ENCODE measurements at regions of chr1 and their contacts with region 1.

Region 1: DNA sequence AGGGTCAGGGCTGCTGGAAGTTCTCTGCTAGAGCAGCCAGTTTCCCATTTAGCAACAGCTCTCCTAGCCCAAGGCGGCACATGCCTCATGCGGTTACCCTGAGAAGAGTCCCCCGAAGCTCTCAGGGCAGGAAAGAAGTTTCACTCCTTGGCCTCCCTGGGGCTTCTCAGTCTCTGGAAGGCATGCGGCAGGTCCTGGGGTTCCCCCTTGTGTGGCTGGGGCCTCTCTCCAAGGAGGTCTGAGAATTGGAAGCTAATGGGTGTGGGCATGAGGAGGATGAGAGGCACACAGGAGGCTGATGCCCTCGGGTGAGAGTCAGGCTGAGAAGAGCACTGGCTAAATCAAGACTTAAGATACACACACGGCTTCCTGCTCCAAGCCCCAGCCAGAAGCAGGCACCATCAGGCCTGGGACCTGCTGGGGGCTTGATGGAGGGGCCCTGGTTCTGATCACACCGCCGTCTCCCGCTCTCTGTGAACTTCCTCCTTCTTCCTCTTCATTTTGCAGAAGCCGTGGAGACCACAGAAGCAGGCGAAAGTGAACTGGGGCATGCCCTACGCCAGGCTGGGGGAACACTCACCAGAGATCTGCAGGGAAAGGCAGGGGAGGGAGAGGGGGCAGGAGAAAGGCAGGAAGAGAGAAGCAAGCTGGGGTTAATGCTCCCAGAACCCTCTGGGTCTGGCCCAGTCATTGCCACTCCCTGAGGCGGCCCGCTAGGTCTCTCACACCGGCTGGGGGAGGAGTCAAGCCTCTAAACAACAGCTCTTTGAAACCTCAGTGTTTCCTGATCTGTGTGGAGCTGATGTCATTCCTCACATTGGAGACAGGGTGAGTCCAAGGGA is 15.1 kb downstream of the BLACAT1 start:
- DNase-seq: peak; percentile 66
- H3K4me3 Mint-ChIP-seq: peak overlapping the region; percentile 63
- H3K27ac Mint-ChIP-seq: peak overlapping the region; percentile 83
- H3K4me1 Mint-ChIP-seq: peaks cover 15% of the 10 kb centered on the region
- H3K27me3 Mint-ChIP-seq: peaks cover 10% of the 10 kb centered on the region

Region 2: GRCh38 chr1:205410581-205411298 is 30.0 kb before region 1 on chr1:
- intact Hi-C with region 1: no loop called
- DNase-seq: no peak
- H3K4me3 Mint-ChIP-seq: no peak overlapping the region
- H3K27ac Mint-ChIP-seq: no peak overlapping the region
- H3K4me1 Mint-ChIP-seq: peaks cover 10% of the 10 kb centered on the region
- H3K27me3 Mint-ChIP-seq: peaks cover 26% of the 10 kb centered on the region

Region 3: GRCh38 chr1:205480349-205480985 is 39.8 kb after region 1 on chr1:
- intact Hi-C with region 1: loop called (anchors 2 kb)
- DNase-seq: peak; percentile 54
- H3K4me3 Mint-ChIP-seq: peak overlapping the region; percentile 2
- H3K27ac Mint-ChIP-seq: peak overlapping the region; percentile 71
- H3K4me1 Mint-ChIP-seq: peaks cover 32% of the 10 kb centered on the region
- H3K27me3 Mint-ChIP-seq: peaks cover 31% of the 10 kb centered on the region

Measured in activated T-helper 1 cell treated with anti-CD3 and anti-CD28 coated beads, Interleukin-12 subunit alpha, Interleukin-12 subunit beta, Interleukin-2, Interleukin-4 antibody, amounts not matched to agents 30 ng/mL and 10 ng/mL and 1 ng/mL, durations not matched to agents 14 hours and 24 hours and 36 hours (primary cell).